CD8-positive, alpha-beta T cell (primary cell): ENCODE measurements at regions of chr12 and their contacts with region 1.

Region 1: GRCh38 chr12:48165094-48165981 is 8.0 kb upstream of the ASB8 start:
- DNase-seq: peak in 7 of 9 experiments; percentile 34 to 85 (median 56)
- ATAC-seq: peak; percentile 90
- H3K4me3 ChIP-seq: no peak overlapping the region
- H3K4me3 Mint-ChIP-seq: no peak overlapping the region
- H3K27ac ChIP-seq: no peak overlapping the region
- H3K27ac Mint-ChIP-seq: no peak overlapping the region
- H3K4me1 ChIP-seq: no peaks in the 10 kb centered on the region
- H3K4me1 Mint-ChIP-seq: peaks cover 6% of the 10 kb centered on the region
- H3K27me3 ChIP-seq: no peaks in the 10 kb centered on the region
- H3K27me3 Mint-ChIP-seq: peaks cover 10% of the 10 kb centered on the region
- CTCF ChIP-seq: peak; percentile 98

Region 2: DNA sequence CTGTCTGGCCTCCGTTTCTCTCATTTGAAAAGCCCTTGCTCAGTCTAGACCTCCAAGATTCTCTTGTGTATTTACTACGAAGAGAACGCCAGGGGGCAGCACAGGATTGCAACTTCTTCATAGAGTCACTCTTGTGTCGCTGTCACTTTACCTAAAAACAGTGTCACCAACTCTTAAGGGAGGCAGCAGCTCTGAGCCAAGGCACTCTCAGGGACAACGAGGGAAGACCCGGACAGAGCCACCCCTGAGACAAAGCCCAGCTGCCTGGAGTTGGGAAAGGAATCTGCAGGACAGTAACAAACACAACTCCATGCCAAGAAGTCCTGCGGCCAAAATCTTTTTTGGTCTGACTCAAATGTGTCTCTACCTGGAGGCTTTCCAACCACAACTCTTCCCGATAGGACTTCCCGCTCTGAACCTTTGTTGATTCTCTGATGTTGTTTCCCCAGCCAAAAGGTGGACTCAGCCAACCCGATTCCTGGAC is 449.9 kb before region 1 on chr12:
- CTCF ChIA-PET with region 1: interaction called, 4 read pairs
- POLR2A ChIA-PET with region 1: no interaction called
- intact Hi-C with region 1: loop called (anchors 1 to 2 kb)
- DNase-seq: peak; percentile 56 to 88 (median 85)
- ATAC-seq: peak; percentile 85
- H3K4me3 ChIP-seq: no peak overlapping the region
- H3K4me3 Mint-ChIP-seq: no peak overlapping the region
- H3K27ac ChIP-seq: no peak overlapping the region
- H3K27ac Mint-ChIP-seq: no peak overlapping the region
- H3K4me1 ChIP-seq: peaks cover 17% of the 10 kb centered on the region
- H3K4me1 Mint-ChIP-seq: peaks cover 27% of the 10 kb centered on the region
- H3K27me3 ChIP-seq: no peaks in the 10 kb centered on the region
- H3K27me3 Mint-ChIP-seq: no peaks in the 10 kb centered on the region
- CTCF ChIP-seq: peak; percentile 67

Region 3: DNA sequence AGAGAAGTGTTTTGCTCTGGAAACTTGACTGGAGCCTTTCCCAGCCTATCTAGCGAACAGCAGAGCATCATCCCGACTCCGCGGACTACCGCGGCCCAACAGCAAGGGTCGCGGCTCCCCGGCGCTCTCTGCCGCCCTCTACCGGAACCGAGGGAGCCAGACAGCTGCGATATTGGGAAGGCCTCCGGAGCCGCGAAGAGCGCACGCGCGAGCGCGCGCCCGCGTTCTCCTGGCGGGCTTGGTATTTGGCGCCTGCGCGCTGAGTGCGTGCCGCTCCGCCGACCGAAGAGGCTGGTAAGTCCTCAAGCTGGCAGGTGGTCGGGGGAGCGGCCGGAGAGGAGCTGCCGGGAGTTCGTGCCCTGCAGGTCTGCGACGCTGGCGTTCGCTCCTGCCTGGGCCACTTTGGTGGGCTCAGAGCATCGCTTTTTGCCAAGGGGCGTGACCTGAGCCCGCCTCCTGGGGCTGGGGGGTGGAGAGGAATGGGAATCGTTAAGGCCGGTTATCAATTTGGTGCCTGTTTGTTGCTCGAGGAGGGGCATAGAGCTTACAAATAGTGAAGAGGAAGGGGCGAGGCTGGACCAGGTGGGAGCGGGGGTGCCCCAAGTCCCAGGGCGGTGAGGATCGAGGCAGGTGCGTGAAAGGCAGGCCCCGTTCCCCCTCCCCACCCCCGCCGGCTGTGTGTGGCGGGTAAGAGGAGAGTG is 201.8 kb before region 1 on chr12 and contains the start of gene TMEM106C:
- CTCF ChIA-PET with region 1: no interaction called
- POLR2A ChIA-PET with region 1: no interaction called
- intact Hi-C with region 1: loop called in 1 of 2 experiments (anchors 1 kb)
- DNase-seq: peak; percentile 82 to 96 (median 90)
- ATAC-seq: peak; percentile 98
- H3K4me3 ChIP-seq: peak within 1 kb of the TSS; percentile 67 to 76
- H3K4me3 Mint-ChIP-seq: peak within 1 kb of the TSS; percentile 97
- H3K27ac ChIP-seq: peak within 1 kb of the TSS in 1 of 2 experiments; percentile 43
- H3K27ac Mint-ChIP-seq: peak within 1 kb of the TSS; percentile 83
- H3K4me1 ChIP-seq: peaks cover 13% of the 10 kb centered on the region
- H3K4me1 Mint-ChIP-seq: peaks cover 25% of the 10 kb centered on the region
- H3K27me3 ChIP-seq: no peaks in the 10 kb centered on the region
- H3K27me3 Mint-ChIP-seq: peaks cover 11% of the 10 kb centered on the region
- CTCF ChIP-seq: peak; percentile 93
- total RNA-seq, gene TMEM106C: 12.1 to 13.1 TPM

Region 4: DNA sequence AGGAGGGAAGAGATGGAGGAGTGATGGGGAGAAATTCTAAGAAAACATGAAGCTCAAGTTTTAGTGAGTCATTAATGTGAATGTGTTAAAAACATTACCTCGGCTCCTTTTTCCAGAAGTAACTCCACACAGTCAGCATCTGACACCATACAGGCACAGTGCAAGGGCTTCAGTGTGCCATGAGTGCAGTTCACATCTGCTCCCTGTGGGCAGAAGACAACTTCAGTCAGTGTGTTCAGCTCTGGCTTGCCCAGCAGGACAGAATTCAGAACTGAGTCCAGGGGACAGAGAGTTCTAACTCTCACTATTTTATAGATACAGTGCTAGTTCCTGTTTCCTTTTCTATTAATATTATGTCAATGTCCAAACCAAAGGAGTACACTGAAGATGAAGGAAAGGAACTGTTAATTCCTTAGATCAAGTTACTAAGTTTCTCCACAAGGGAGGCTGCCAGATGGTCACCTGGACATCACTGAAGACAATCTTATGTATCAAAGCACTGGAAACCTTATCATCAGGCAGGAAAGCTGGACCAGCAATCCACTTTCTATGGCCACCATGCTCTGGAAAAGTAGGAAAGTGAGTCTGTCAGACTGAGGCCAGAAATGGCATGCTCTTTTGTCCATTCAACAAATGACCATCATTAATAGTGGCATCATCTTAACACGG is 14.1 kb before region 1 on chr12:
- CTCF ChIA-PET with region 1: interaction called, 14 read pairs
- POLR2A ChIA-PET with region 1: no interaction called
- intact Hi-C with region 1: no loop called
- DNase-seq: no peak
- ATAC-seq: no peak
- H3K4me3 ChIP-seq: no peak overlapping the region
- H3K4me3 Mint-ChIP-seq: no peak overlapping the region
- H3K27ac ChIP-seq: no peak overlapping the region
- H3K27ac Mint-ChIP-seq: no peak overlapping the region
- H3K4me1 ChIP-seq: peaks cover 3% of the 10 kb centered on the region
- H3K4me1 Mint-ChIP-seq: peaks cover 27% of the 10 kb centered on the region
- H3K27me3 ChIP-seq: no peaks in the 10 kb centered on the region
- H3K27me3 Mint-ChIP-seq: no peaks in the 10 kb centered on the region
- CTCF ChIP-seq: no peak

Region 5: GRCh38 chr12:48183091-48183875 is 17.9 kb after region 1 on chr12 and contains the start of gene CCDC184:
- CTCF ChIA-PET with region 1: interaction called, 23 read pairs
- POLR2A ChIA-PET with region 1: interaction called, 5 read pairs
- intact Hi-C with region 1: no loop called
- DNase-seq: peak; percentile 48 to 93 (median 74)
- ATAC-seq: peak; percentile 80
- H3K4me3 ChIP-seq: peak within 1 kb of the TSS; percentile 75 to 99
- H3K4me3 Mint-ChIP-seq: peak within 1 kb of the TSS; percentile 93
- H3K27ac ChIP-seq: peak within 1 kb of the TSS; percentile 50 to 85
- H3K27ac Mint-ChIP-seq: peak within 1 kb of the TSS; percentile 43
- H3K4me1 ChIP-seq: peaks cover 14% of the 10 kb centered on the region
- H3K4me1 Mint-ChIP-seq: peaks cover 6% of the 10 kb centered on the region
- H3K27me3 ChIP-seq: peaks cover 6 to 12% of the 10 kb centered on the region in 2 experiments
- H3K27me3 Mint-ChIP-seq: peaks cover 29% of the 10 kb centered on the region
- CTCF ChIP-seq: peak; percentile 54
- total RNA-seq, gene CCDC184: 0.90 to 1.3 TPM

Region 6: GRCh38 chr12:48508991-48509390 is 343.7 kb after region 1 on chr12:
- CTCF ChIA-PET with region 1: no interaction called
- POLR2A ChIA-PET with region 1: no interaction called
- intact Hi-C with region 1: no loop called
- DNase-seq: no peak
- ATAC-seq: no peak
- H3K4me3 ChIP-seq: no peak overlapping the region
- H3K4me3 Mint-ChIP-seq: no peak overlapping the region
- H3K27ac ChIP-seq: no peak overlapping the region
- H3K27ac Mint-ChIP-seq: no peak overlapping the region
- H3K4me1 ChIP-seq: no peaks in the 10 kb centered on the region
- H3K4me1 Mint-ChIP-seq: no peaks in the 10 kb centered on the region
- H3K27me3 ChIP-seq: no peaks in the 10 kb centered on the region
- H3K27me3 Mint-ChIP-seq: peaks cover 5% of the 10 kb centered on the region
- CTCF ChIP-seq: no peak

Region 7: GRCh38 chr12:48618541-48618940 is 453.2 kb after region 1 on chr12:
- CTCF ChIA-PET with region 1: interaction called, 3 read pairs
- POLR2A ChIA-PET with region 1: no interaction called
- intact Hi-C with region 1: loop called in 1 of 2 experiments (anchors 1 kb)
- DNase-seq: peak; percentile 56 to 84 (median 73)
- ATAC-seq: peak; percentile 100
- H3K4me3 ChIP-seq: no peak overlapping the region
- H3K4me3 Mint-ChIP-seq: no peak overlapping the region
- H3K27ac ChIP-seq: no peak overlapping the region
- H3K27ac Mint-ChIP-seq: no peak overlapping the region
- H3K4me1 ChIP-seq: no peaks in the 10 kb centered on the region
- H3K4me1 Mint-ChIP-seq: no peaks in the 10 kb centered on the region
- H3K27me3 ChIP-seq: no peaks in the 10 kb centered on the region
- H3K27me3 Mint-ChIP-seq: peaks cover 33% of the 10 kb centered on the region
- CTCF ChIP-seq: peak; percentile 94